ENCODE measurements at regions of chr5 and their contacts with region 1.

Region 1: GRCh38 chr5:112707187-112708102 is 30.2 kb upstream of the APC start:
- DNase-seq: peak; percentile 99
- H3K4me3 ChIP-seq: peak overlapping the region; percentile 90
- H3K27ac ChIP-seq: peak overlapping the region; percentile 64
- H3K4me1 ChIP-seq: peaks cover 27% of the 10 kb centered on the region
- CTCF ChIP-seq: 0 out of 2 replicates have a peak, but pooled peaks have one; percentile 24

Region 2: GRCh38 chr5:112729630-112730029 is 22.2 kb after region 1 on chr5:
- CTCF ChIA-PET with region 1: no interaction called
- POLR2A ChIA-PET with region 1: interaction called, 31 read pairs
- intact Hi-C with region 1: no loop called
- DNase-seq: no peak
- H3K4me3 ChIP-seq: no peak overlapping the region
- H3K27ac ChIP-seq: no peak overlapping the region
- H3K4me1 ChIP-seq: no peaks in the 10 kb centered on the region
- CTCF ChIP-seq: no peak

Region 3: GRCh38 chr5:112737463-112738190 is 30.2 kb after region 1 on chr5 and contains the start of gene APC:
- CTCF ChIA-PET with region 1: no interaction called
- POLR2A ChIA-PET with region 1: interaction called, 31 read pairs
- intact Hi-C with region 1: loop called (anchors 2 kb)
- DNase-seq: peak; percentile 88
- H3K4me3 ChIP-seq: peak within 1 kb of the TSS; percentile 85
- H3K27ac ChIP-seq: peak within 1 kb of the TSS; percentile 37
- H3K4me1 ChIP-seq: peaks cover 18% of the 10 kb centered on the region
- CTCF ChIP-seq: no peak
- total RNA-seq, gene APC: 33.1 and 41.4 TPM in 2 replicates

Measured in OCI-LY7 (cell line).